Left cardiac atrium (tissue), 4 donors: ENCODE measurements at regions of chr7 and their contacts with region 1.

Region 1: GRCh38 chr7:139075031-139075652 is 34.4 kb downstream of the ZC3HAV1 start:
- DNase-seq: peak; percentile 68
- ATAC-seq: peak; percentile 88 to 95

Region 2: GRCh38 chr7:138738551-138739335 is 336.4 kb before region 1 on chr7:
- intact Hi-C with region 1: no loop called
- DNase-seq: peak; percentile 84
- ATAC-seq: peak; percentile 85 to 86

Region 3: GRCh38 chr7:139016931-139017511 is 58.1 kb before region 1 on chr7:
- intact Hi-C with region 1: loop called (anchors 5 to 10 kb)
- DNase-seq: peak; percentile 72
- ATAC-seq: peak; percentile 86 to 90